HCT116 (cell line): ENCODE measurements at regions of chr1 and their contacts with region 1.

Region 1: GRCh38 chr1:241985787-241986186 is 13.1 kb downstream of the MAP1LC3C start:
- DNase-seq: peak; percentile 38
- ATAC-seq: peak; percentile 82
- H3K4me3 ChIP-seq: no peak overlapping the region
- H3K27ac ChIP-seq: no peak overlapping the region
- H3K4me1 ChIP-seq: peaks cover 7 to 15% of the 10 kb centered on the region in 2 experiments; a peak in 3 of 4 replicates
- H3K27me3 ChIP-seq: no peaks in the 10 kb centered on the region
- CTCF ChIP-seq: peak; percentile 54 to 69 (median 56); a peak in 5 of 6 replicates
- POLR2A ChIP-seq: no peak
- RAD21 ChIP-seq: peak; percentile 63

Region 2: GRCh38 chr1:241828463-241829021 is 157.2 kb before region 1 on chr1:
- CTCF ChIA-PET with region 1: no interaction called
- POLR2A ChIA-PET with region 1: no interaction called
- RAD21 ChIA-PET with region 1: no interaction called
- intact Hi-C with region 1: no loop called
- DNase-seq: no peak
- ATAC-seq: no peak
- H3K4me3 ChIP-seq: no peak overlapping the region
- H3K27ac ChIP-seq: no peak overlapping the region
- H3K4me1 ChIP-seq: no peaks in the 10 kb centered on the region
- H3K27me3 ChIP-seq: no peaks in the 10 kb centered on the region
- CTCF ChIP-seq: no peak
- POLR2A ChIP-seq: no peak
- RAD21 ChIP-seq: no peak

Region 3: DNA sequence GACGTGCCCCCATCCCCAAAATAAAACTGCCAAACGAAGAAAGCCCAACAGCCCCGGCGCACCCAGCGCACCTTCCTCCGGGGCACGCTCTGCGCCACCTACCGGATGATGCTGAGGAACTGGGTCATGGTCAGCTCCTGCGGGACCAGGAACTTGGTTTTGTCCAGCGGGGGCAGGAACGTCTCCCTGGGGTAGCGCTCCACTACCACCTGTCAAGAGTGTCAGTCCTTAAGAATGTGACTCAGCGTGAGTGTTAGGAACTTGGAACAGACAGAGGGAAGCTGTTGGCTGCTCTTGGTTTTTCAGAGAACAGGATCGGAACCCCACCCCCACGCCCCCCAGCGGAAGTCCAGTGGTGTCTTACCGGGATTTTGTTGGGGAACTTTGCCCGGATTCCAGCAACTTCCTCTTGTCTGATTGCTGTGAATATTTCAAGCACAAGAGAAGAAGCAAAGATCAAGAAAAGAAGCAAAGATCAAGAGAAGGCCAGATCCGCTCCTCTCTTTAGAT is 12.7 kb after region 1 on chr1:
- CTCF ChIA-PET with region 1: interaction called, 25 read pairs
- POLR2A ChIA-PET with region 1: no interaction called
- RAD21 ChIA-PET with region 1: no interaction called
- intact Hi-C with region 1: no loop called
- DNase-seq: peak; percentile 89
- ATAC-seq: peak; percentile 97
- H3K4me3 ChIP-seq: peak overlapping the region; percentile 25 to 43; a peak in 3 of 4 replicates
- H3K27ac ChIP-seq: peak overlapping the region; percentile 1; the same call in 1 of the 2 replicates
- H3K4me1 ChIP-seq: peaks cover 0 to 10% of the 10 kb centered on the region in 2 experiments; a peak in 3 of 4 replicates
- H3K27me3 ChIP-seq: no peaks in the 10 kb centered on the region
- CTCF ChIP-seq: peak; percentile 80 to 98 (median 96)
- POLR2A ChIP-seq: no peak
- RAD21 ChIP-seq: peak; percentile 55

Region 4: DNA sequence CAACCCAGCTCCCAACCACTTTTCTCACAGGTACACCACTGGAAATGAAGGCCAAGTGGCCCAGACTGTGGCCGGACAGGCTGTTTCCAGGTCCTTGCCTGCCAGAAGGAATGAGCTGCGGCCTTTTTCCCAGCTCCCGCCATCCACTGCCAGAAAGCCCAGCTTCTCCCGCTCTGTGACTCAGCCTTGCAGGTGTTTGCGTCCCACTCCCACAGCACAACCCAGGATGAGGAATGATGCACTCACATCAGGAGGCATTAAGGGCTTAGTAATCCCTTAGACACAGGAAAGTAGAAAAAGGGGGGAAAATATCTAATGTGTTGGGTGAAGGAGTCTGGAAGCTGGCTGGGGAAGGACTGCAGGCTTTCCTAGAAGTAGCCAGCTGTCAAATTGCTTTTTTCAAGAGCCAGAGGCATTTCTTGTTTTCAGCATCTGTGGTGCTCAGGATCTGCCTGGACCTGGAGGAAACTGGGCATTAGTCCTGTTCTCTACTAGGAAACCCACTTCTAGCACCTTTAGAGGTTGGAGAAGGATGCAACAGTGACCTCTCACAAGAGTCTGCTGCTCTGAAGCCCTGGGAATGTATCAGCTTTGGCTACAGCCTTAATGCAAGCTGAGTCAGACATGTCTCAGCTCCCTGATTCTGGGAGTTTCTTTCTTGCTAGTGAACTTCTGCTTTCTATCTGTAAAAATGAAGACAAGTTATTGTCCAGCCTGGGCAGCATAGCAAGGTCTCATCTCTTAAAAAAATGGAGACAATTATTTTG is 26.3 kb after region 1 on chr1:
- CTCF ChIA-PET with region 1: no interaction called
- POLR2A ChIA-PET with region 1: no interaction called
- RAD21 ChIA-PET with region 1: no interaction called
- intact Hi-C with region 1: no loop called
- DNase-seq: no peak
- ATAC-seq: no peak
- H3K4me3 ChIP-seq: no peak overlapping the region
- H3K27ac ChIP-seq: no peak overlapping the region
- H3K4me1 ChIP-seq: no peaks in the 10 kb centered on the region
- H3K27me3 ChIP-seq: no peaks in the 10 kb centered on the region
- CTCF ChIP-seq: no peak
- POLR2A ChIP-seq: no peak
- RAD21 ChIP-seq: no peak